ENCODE measurements at regions of chr18 and their contacts with region 1.

Region 1: DNA sequence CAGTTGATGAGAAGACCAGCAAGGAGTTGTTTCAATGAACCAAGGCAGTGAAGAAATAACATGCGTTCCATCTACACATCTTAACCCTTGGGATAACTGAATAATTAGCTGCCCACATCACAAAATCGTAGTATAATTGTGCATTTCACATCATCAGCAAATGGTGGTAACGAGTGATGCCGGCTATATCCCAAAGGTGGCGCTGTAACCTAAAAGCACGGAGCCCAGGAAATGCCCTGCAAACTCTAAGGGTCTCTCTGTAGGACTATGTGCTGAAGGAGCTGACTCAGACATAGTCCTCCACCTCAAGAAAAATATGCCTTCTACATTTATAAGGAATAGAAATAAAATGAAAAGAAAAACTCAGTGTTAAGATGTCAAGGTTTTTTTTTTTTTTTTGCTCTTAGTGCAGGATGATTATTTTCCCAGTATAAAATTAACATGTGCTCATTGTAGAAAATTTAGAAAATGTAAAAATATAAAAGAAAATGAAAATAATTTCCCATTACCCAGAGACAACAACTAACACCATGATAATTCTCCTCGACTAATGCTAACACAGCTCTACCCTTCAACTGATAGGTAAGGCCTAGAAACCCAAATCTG is 23.1 kb upstream of the DSG3 start:
- DNase-seq: peak; percentile 67
- H3K4me3 Mint-ChIP-seq: no peak overlapping the region
- H3K27ac Mint-ChIP-seq: no peak overlapping the region
- H3K4me1 Mint-ChIP-seq: peaks cover 24% of the 10 kb centered on the region
- H3K27me3 Mint-ChIP-seq: no peaks in the 10 kb centered on the region
- CTCF ChIP-seq: peak; percentile 83

Region 2: DNA sequence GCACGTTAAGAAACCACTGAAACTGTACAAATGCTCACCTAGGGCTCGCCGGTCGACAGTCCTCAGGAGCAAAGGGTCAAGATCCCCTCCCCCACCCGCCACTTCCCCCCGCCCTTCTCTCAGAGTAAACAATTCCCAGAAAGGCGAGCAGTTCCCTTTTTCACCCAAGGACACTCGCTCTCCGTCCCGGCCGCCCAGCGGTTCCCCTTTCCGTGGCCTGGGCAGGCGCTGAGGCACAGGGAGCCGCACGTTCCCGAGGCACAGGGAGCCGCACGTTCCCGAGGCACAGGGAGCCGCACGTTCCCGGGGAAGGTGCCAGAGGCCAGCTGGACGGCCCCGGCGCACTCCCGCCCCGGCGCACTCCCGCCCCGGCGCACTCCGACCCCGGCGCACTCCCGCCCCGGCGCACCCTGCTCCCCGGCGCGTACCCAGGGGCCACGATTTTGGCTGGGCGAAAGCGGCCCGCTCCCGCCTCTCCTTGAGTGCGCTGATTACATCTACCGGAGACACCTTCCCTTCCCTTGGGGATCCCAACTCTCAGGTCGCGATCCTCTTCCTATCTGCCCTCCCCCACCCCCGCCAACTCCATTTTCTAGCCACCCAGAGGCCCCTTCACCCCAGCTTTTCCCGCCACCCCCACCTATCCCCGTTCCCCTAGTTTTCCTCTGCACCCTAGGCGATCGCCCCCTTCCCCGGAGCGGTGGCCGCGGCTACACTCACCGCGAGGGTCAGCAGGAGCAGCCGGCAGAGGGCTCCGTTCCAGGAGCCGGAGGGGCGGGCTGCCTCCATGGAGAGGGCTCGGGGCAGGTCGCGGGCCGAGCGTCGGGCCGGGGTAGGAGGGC is 323.1 kb before region 1 on chr18:
- CTCF ChIA-PET with region 1: interaction called, 4 read pairs
- POLR2A ChIA-PET with region 1: interaction called, 4 read pairs
- intact Hi-C with region 1: loop called (anchors 10 kb)
- DNase-seq: peak; percentile 53
- H3K4me3 Mint-ChIP-seq: peak overlapping the region; percentile 82
- H3K27ac Mint-ChIP-seq: peak overlapping the region; percentile 81
- H3K4me1 Mint-ChIP-seq: peaks cover 30% of the 10 kb centered on the region
- H3K27me3 Mint-ChIP-seq: no peaks in the 10 kb centered on the region
- CTCF ChIP-seq: no peak

Region 3: GRCh38 chr18:31393286-31393685 is 31.2 kb before region 1 on chr18:
- CTCF ChIA-PET with region 1: interaction called, 10 read pairs
- POLR2A ChIA-PET with region 1: no interaction called
- intact Hi-C with region 1: no loop called
- DNase-seq: no peak
- H3K4me3 Mint-ChIP-seq: no peak overlapping the region
- H3K27ac Mint-ChIP-seq: peak overlapping the region; percentile 17
- H3K4me1 Mint-ChIP-seq: peaks cover 7% of the 10 kb centered on the region
- H3K27me3 Mint-ChIP-seq: no peaks in the 10 kb centered on the region
- CTCF ChIP-seq: no peak

Region 4: GRCh38 chr18:31454066-31454708 is 29.7 kb after region 1 on chr18:
- CTCF ChIA-PET with region 1: interaction called, 15 read pairs
- POLR2A ChIA-PET with region 1: interaction called, 219 read pairs
- intact Hi-C with region 1: loop called (anchors 2 kb)
- DNase-seq: peak; percentile 96
- H3K4me3 Mint-ChIP-seq: peak overlapping the region; percentile 67
- H3K27ac Mint-ChIP-seq: peak overlapping the region; percentile 94
- H3K4me1 Mint-ChIP-seq: peaks cover 23% of the 10 kb centered on the region
- H3K27me3 Mint-ChIP-seq: no peaks in the 10 kb centered on the region
- CTCF ChIP-seq: no peak

Region 5: GRCh38 chr18:31506024-31506742 is 81.7 kb after region 1 on chr18:
- CTCF ChIA-PET with region 1: interaction called, 19 read pairs
- POLR2A ChIA-PET with region 1: interaction called, 21 read pairs
- intact Hi-C with region 1: loop called (anchors 1 kb)
- DNase-seq: peak; percentile 42
- H3K4me3 Mint-ChIP-seq: no peak overlapping the region
- H3K27ac Mint-ChIP-seq: no peak overlapping the region
- H3K4me1 Mint-ChIP-seq: peaks cover 34% of the 10 kb centered on the region
- H3K27me3 Mint-ChIP-seq: no peaks in the 10 kb centered on the region
- CTCF ChIP-seq: peak; percentile 35